ENCODE measurements at regions of chr17 and their contacts with region 1.

Region 1: GRCh38 chr17:32877164-32877764 is 340 bp upstream of the MYO1D start:
- DNase-seq: peak; percentile 96
- CTCF ChIP-seq: peak; percentile 89

Region 2: GRCh38 chr17:32461853-32462617 is 415.2 kb before region 1 on chr17:
- CTCF ChIA-PET with region 1: interaction called, 22 read pairs
- POLR2A ChIA-PET with region 1: no interaction called
- DNase-seq: no peak
- CTCF ChIP-seq: peak; percentile 43

Region 3: DNA sequence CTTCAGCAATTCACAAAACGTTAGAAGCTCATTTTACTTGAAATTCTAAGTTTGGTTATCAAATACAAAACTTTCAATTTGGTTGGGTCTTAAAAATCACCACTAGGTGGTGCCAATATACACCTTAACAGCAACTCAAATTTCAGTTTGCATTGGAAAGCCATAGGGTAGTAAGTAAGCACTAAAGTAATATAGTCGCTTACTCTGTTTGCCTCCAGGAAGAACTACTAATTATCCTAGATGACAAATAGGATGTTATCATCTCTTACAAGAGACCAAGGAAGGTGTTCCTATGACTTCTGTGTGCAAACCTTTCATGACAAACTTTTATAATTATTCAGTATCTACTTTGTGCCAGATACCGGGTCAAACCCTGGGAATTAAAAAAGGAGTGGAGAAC is 93.7 kb before region 1 on chr17:
- CTCF ChIA-PET with region 1: interaction called, 204 read pairs
- POLR2A ChIA-PET with region 1: interaction called, 3 read pairs
- DNase-seq: peak; percentile 61
- CTCF ChIP-seq: peak; percentile 54

Region 4: DNA sequence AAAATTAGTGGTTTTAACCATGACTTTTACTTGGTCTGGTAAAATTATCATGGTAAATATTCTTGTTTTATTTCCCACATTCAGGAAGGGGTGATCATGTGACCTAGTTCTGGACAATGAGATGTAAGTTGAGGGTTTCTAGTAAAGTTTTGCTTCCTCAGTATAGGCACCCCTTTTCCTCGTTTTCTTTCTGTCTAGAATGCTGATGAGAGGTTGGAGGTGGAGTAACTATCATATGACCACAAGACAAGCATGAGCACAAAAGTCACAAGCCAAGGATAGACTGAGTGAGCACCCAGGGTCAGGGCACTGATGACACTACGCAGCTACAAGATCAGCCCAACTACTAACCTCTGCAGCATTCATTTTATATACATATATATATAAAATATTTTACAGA is 54.3 kb before region 1 on chr17:
- CTCF ChIA-PET with region 1: interaction called, 120 read pairs
- POLR2A ChIA-PET with region 1: interaction called, 8 read pairs
- DNase-seq: no peak
- CTCF ChIP-seq: no peak

Region 5: DNA sequence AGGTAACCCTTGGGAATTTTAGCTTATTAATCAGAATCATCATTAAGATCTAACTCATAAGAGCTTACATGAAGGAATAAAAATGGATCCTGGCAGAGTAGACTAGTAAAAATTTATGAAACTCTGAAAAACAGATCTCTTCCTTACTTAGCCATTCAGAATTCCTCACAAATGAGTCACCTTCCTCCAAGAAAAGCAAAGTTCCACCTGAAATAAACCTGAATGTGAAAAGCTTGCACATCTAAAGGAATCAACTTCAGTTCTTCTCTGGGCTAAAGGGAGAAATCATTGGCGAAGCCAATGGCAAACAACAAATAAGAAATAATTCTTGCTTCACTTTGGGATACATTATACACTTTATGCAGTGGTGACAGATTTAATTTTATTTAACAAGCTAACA is 23.1 kb before region 1 on chr17:
- CTCF ChIA-PET with region 1: interaction called, 133 read pairs
- POLR2A ChIA-PET with region 1: no interaction called
- DNase-seq: no peak
- CTCF ChIP-seq: no peak

Region 6: DNA sequence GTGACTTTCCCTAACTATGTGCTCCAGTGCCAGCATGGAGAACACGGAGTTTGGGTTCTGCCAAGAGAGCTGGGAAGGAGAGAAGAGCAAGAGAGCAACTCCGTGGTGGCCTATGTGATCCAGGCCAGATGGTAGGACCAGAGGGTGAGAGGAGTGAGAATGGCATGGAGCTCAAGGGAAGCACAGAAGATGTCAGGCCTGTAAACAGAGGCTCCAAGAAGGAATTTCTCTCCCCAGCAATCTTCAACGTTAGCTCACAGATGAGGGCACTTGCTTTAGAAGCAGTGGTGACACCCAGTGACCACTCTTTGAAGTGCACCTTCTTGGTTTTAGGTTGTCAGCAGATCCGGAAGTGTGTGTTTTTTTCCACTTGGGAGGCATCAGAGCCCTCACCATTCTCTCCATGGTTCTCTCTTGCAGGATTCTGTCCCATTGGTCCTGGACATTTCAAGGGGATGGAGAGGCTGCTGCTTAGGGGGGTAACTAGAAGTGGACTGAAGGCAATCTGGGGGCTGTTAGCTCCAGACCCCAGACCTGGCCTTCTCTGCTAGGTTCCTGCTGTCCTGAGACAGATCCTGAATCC is 32.6 kb after region 1 on chr17:
- CTCF ChIA-PET with region 1: interaction called, 24 read pairs
- POLR2A ChIA-PET with region 1: no interaction called
- DNase-seq: peak; percentile 79
- CTCF ChIP-seq: peak; percentile 75

Measured in GM10248 (cell line).